PC-9 (cell line): ENCODE measurements at regions of chr9 and their contacts with region 1.

Region 1: DNA sequence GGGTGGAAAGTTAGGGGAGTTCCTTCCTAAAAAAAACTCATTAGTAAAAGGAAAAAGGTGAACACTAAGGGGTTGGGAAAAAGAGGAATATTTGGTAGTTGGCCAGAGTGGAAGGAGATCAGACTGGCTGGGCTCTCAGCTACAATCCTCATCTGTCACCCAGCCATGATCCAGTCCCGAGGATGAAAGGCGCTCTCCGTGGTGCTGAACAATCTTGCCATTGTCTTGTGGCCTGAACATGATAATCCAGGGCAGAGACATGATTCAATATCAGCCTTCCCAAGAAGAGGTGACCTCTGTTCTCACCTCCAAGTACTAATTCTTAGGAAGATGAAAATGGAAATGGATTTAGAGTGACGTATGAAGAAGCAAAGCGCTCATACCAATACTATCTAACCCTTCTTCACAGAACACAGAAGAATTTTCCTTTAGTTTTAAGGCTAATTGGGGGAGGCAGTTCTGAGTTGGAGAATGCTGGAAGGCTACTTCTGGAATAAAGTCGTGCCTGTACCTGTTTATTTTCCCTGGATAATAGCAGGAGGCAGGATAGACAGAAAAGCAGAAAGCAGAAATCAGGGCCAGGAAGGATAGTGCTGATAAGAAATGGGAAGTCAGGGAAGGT is 36.6 kb upstream of the MYORG start:
- DNase-seq: peak in 1 of 2 experiments; percentile 29
- H3K4me3 ChIP-seq: no peak overlapping the region
- H3K27ac ChIP-seq: no peak overlapping the region
- H3K4me1 ChIP-seq: no peaks in the 10 kb centered on the region
- H3K27me3 ChIP-seq: no peaks in the 10 kb centered on the region
- CTCF ChIP-seq: no peak

Region 2: DNA sequence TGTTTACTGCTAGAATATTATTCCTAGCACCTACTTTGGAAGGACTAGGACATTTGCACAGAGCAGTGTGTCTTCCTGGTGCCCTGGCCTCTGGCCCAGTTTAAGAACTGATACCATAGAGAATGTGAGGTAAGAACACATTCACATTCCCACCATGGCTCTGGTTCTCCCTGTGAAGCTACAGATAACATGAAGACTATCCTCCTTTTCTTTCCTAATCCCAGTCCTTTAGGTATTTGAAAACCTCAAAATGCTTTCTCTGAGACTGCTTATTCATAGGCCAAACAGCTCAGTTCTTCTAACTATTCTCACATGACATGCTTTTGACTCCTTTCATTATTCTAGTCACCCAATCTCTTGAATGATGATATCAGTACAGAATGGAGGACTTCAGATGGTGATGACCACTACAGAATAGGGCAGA is 33.1 kb after region 1 on chr9:
- CTCF ChIA-PET with region 1: interaction called, 18 read pairs
- POLR2A ChIA-PET with region 1: interaction called, 22 read pairs
- intact Hi-C with region 1: no loop called
- DNase-seq: no peak
- H3K4me3 ChIP-seq: no peak overlapping the region
- H3K27ac ChIP-seq: no peak overlapping the region
- H3K4me1 ChIP-seq: peaks cover 12% of the 10 kb centered on the region
- H3K27me3 ChIP-seq: no peaks in the 10 kb centered on the region
- CTCF ChIP-seq: no peak

Region 3: DNA sequence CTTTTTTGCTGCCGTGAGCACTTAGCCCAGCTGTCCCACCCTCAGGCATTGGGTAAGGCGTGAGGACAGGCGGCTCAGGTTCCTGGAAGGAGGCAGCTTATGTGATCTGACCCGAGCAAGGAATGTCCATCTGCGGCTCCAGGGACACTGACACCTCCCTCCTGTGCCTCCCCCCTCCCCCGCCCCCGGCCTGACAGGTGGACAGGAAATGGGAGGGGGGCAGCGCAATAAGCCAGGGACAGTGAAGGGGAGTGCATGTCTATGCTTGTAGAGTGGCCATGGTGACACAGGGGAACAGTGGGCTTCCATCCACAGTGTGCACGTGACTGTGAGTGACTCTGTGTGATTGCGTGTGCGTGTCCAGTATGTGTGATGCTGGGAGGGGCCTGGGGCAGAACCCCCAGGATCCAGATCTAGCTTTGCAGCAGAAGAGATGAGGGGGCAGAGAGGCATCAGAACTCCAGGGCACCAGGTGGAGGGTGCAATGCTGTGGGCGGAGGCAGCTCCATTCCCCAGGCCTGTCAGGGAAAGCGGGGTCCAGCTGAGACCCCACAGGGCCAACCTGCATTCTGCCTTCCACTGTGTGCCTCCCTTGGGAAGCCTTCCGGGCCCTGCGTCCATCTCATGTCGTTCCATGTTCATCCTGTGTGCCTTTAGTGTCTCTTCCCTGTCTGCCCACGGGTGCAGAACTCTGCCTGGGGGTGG is 145.7 kb after region 1 on chr9:
- CTCF ChIA-PET with region 1: no interaction called
- POLR2A ChIA-PET with region 1: interaction called, 21 read pairs
- intact Hi-C with region 1: no loop called
- DNase-seq: no peak
- H3K4me3 ChIP-seq: no peak overlapping the region
- H3K27ac ChIP-seq: no peak overlapping the region
- H3K4me1 ChIP-seq: no peaks in the 10 kb centered on the region
- H3K27me3 ChIP-seq: peaks cover 21% of the 10 kb centered on the region
- CTCF ChIP-seq: no peak